Sigmoid colon (tissue), 7 donors: ENCODE measurements at regions of chr12 and their contacts with region 1.

Region 1: DNA sequence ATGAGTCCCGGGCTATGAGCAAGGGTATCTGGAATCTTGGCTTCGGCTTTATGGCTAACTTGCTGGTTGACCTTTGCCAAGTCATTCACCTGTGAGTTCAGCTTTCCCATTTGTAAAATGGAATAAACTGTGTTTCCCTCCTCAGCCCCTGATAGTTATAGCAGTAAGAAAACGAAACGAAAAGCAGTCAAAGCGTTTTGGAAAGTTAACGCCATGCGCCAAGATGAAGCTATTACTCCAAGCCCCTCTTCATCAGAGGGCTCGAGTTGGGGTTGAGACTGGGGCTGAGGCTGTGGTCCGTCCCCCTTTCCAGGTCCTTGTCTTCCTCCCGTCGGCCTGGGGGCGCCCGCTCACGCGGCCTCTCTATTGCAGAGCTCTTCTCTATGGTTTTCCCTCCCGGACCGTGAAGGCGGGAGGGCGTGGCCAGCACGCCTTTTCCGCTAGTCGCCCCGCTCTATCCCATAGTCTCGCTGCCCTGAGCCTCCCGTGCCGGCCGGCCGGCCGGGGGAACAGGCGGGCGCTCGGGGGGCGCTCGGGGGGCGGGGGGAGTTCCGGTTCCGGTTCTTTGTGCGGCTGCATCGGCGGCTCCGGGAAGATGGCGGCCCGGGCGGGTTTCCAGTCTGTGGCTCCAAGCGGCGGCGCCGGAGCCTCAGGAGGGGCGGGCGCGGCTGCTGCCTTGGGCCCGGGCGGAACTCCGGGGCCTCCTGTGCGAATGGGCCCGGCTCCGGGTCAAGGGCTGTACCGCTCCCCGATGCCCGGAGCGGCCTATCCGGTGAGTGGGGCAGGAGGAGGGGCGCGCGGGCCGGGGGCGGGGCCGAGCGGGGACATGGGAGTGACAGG is at the start of gene SMARCD1:
- DNase-seq: peak; percentile 96
- H3K4me3 ChIP-seq: peak within 1 kb of the TSS; percentile 80 to 99 (median 90)
- H3K27ac ChIP-seq: peak within 1 kb of the TSS; percentile 96 to 99 (median 98)
- H3K4me1 ChIP-seq: peaks cover 0 to 24% (median 11%) of the 10 kb centered on the region in 4 donors
- H3K27me3 ChIP-seq: no peaks in the 10 kb centered on the region
- CTCF ChIP-seq: peak in 1 of 4 experiments; percentile 22
- EP300 ChIP-seq: no peak
- POLR2A ChIP-seq: no peak
- total RNA-seq, gene SMARCD1: 22.4 to 64.8 (median 39.2) TPM

Region 2: GRCh38 chr12:50167041-50167828 is 82.2 kb after region 1 on chr12 and contains the start of gene CERS5:
- intact Hi-C with region 1: loop called (anchors 2 kb)
- DNase-seq: peak; percentile 99
- H3K4me3 ChIP-seq: peak within 1 kb of the TSS; percentile 93 to 99 (median 96)
- H3K27ac ChIP-seq: peak within 1 kb of the TSS; percentile 95 to 99 (median 97)
- H3K4me1 ChIP-seq: peaks cover 0 to 19% (median 17%) of the 10 kb centered on the region in 4 donors
- H3K27me3 ChIP-seq: no peaks in the 10 kb centered on the region
- CTCF ChIP-seq: peak in 2 of 4 experiments; percentile 9 to 21
- EP300 ChIP-seq: no peak
- POLR2A ChIP-seq: peak; percentile 35 to 62
- total RNA-seq, gene CERS5: 21.7 to 29.1 (median 23.3) TPM

Region 3: GRCh38 chr12:50314629-50315312 is 229.8 kb after region 1 on chr12:
- intact Hi-C with region 1: no loop called
- DNase-seq: no peak
- H3K4me3 ChIP-seq: no peak overlapping the region
- H3K27ac ChIP-seq: no peak overlapping the region
- H3K4me1 ChIP-seq: no peaks in the 10 kb centered on the region
- H3K27me3 ChIP-seq: no peaks in the 10 kb centered on the region
- CTCF ChIP-seq: peak; percentile 20 to 41 (median 39)
- EP300 ChIP-seq: no peak
- POLR2A ChIP-seq: no peak